AG04449 (cell line): ENCODE measurements at regions of chr17 and their contacts with region 1.

Region 1: DNA sequence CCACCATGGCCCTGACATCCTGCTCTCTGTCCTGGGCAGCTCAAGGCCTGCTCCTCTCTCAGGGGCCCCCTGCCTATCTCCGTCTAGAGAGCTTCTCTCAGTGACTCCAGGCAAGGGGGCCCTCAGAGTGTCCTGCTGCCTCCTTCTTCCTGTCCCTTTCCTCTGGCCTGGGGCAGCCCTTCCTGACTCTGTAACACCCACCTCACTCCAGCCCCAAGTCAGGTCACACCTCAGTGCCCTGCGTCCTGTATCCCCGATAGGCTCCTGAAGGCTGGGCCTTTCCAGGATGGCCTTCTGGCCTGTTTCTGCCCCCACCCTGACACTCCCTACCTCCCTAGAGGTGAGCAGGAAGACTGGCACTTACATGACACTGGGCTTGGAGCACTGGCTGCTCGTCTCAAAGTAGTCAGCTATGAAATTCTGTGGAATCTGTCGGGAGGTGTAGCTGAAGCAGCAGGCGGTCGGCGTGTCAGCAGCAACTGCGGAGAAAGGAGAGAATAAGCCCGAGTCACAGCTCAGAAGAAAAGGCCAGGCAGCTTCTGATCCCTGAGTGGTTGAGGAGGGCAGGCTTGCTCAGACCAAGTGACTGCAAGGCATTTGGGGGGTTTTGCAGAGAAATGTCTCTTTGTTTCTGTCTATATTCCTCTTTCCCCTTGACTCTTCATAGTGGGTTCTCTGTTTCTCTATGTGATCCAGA is 976 bp downstream of the CCL3L1 start:
- DNase-seq: no peak
- H3K4me3 ChIP-seq: no peak overlapping the region
- CTCF ChIP-seq: no peak

Region 2: DNA sequence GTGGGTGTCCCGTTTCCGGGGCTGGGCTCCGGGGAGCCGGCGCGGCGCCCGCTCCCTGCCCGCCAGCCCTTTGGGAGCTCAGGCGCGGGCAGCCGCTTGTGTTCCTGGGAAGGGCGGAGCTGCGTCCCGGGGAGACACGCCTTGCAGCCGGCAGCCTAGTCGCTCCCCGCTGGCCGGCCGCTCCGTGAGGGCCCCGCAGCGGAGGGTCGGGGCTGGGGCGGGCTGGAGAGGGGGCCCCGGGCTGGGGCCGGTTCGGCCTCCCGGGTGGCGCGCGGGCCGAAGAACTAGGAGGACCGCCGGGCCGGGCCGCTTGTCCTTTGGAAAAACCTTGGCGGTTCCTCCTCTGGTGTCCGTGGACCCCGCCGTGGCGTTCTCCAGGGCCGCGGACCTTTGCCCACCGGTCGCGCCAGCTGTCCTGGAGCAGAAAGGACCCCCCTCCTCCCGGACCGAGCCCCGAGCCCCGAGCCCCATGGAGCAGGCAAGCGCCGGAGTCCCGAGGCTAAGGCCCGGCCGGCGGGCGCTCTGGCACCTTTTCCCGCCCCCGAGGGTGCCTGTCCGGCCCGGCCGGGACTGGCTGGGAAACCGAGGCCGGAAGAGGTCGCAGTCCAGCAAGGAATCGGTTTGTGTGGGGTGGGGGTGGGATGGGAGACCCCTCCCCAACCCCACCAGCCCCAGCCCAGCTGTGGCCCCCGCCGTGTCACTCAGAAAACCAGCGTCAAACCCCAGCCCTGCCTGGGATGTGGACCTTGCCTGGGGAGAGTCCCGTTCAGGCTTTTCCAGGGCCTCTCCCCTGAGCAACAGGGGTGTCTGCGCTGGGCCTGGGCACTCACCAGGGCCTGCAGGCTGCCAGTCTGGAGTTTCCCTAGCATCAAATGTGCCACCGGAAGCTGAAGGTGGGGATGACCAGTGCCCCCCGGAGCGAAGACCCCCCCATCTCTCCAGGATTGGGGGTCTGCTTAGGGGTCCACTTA is 12.3 kb before region 1 on chr17:
- CTCF ChIA-PET with region 1: interaction called, 16 read pairs
- POLR2A ChIA-PET with region 1: interaction called, 17 read pairs
- DNase-seq: peak; percentile 23
- H3K4me3 ChIP-seq: peak overlapping the region; percentile 74
- CTCF ChIP-seq: no peak